ENCODE measurements at regions of chr7 and their contacts with region 1.

Region 1: DNA sequence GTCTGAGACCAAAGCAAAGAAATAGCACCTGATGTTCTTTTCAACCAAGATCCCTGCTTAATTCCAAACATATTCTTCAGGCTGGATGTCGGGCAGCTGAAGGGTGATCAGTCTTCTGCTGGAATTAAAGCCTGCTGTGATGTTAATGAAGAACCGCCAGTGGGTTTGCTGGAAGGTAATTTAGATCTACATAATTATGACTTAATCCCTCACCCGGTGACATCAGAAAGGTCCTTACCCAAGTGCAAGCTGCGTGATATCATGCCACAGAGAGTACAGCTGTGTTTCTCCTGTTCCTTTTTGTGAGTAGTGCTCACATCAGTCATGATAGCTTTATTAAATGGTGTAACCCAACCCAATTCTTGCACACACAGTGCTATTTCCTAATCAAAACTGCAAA is 29.1 kb upstream of the LRGUK start:
- DNase-seq: no peak
- H3K4me3 ChIP-seq: no peak overlapping the region
- H3K27ac ChIP-seq: no peak overlapping the region
- H3K4me1 ChIP-seq: no peaks in the 10 kb centered on the region
- H3K27me3 ChIP-seq: no peaks in the 10 kb centered on the region
- CTCF ChIP-seq: no peak
- POLR2A ChIP-seq: no peak

Region 2: GRCh38 chr7:133784486-133785001 is 313.5 kb before region 1 on chr7:
- intact Hi-C with region 1: no loop called
- DNase-seq: no peak
- H3K4me3 ChIP-seq: no peak overlapping the region
- H3K27ac ChIP-seq: no peak overlapping the region
- H3K4me1 ChIP-seq: no peaks in the 10 kb centered on the region
- H3K27me3 ChIP-seq: no peaks in the 10 kb centered on the region
- CTCF ChIP-seq: no peak
- POLR2A ChIP-seq: no peak

Region 3: GRCh38 chr7:134113655-134114054 is 15.6 kb after region 1 on chr7:
- intact Hi-C with region 1: loop called (anchors 2 kb)
- DNase-seq: no peak
- H3K4me3 ChIP-seq: no peak overlapping the region
- H3K27ac ChIP-seq: no peak overlapping the region
- H3K4me1 ChIP-seq: no peaks in the 10 kb centered on the region
- H3K27me3 ChIP-seq: no peaks in the 10 kb centered on the region
- CTCF ChIP-seq: no peak
- POLR2A ChIP-seq: no peak

Region 4: DNA sequence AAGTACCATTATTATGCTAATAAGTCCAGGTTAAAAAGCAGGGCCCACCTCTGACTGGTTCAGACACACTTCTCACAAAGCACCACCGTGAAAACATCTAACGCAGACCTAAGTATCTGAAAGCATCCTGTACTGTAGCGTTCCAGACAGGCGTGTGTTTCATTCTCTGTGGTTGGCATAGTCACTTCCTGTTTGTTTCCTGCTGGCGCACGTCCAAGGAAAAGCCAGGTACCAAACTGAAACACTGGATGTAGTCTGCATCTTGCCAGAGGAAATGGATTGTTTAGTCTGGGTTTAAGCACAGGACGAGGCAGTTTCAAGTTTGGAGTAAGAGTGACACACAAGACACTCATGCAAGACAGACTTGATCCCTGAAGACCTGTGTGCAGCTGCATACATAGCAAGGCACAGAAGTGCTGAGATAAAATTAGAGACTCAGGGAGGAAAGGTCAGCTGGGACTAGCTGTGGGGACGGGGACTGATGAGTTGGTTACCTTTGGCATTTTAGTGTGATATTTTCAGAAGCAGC is 571.8 kb after region 1 on chr7:
- intact Hi-C with region 1: no loop called
- DNase-seq: peak; percentile 42
- H3K4me3 ChIP-seq: no peak overlapping the region
- H3K27ac ChIP-seq: no peak overlapping the region
- H3K4me1 ChIP-seq: no peaks in the 10 kb centered on the region
- H3K27me3 ChIP-seq: no peaks in the 10 kb centered on the region
- CTCF ChIP-seq: no peak
- POLR2A ChIP-seq: no peak